Right ventricle myocardium superior (tissue), 1 donor: ENCODE measurements at regions of chr5 and their contacts with region 1.

Region 1: GRCh38 chr5:31581498-31582099 is 49.5 kb downstream of the C5orf22 start:
- DNase-seq: no peak
- ATAC-seq: peak; percentile 61

Region 2: DNA sequence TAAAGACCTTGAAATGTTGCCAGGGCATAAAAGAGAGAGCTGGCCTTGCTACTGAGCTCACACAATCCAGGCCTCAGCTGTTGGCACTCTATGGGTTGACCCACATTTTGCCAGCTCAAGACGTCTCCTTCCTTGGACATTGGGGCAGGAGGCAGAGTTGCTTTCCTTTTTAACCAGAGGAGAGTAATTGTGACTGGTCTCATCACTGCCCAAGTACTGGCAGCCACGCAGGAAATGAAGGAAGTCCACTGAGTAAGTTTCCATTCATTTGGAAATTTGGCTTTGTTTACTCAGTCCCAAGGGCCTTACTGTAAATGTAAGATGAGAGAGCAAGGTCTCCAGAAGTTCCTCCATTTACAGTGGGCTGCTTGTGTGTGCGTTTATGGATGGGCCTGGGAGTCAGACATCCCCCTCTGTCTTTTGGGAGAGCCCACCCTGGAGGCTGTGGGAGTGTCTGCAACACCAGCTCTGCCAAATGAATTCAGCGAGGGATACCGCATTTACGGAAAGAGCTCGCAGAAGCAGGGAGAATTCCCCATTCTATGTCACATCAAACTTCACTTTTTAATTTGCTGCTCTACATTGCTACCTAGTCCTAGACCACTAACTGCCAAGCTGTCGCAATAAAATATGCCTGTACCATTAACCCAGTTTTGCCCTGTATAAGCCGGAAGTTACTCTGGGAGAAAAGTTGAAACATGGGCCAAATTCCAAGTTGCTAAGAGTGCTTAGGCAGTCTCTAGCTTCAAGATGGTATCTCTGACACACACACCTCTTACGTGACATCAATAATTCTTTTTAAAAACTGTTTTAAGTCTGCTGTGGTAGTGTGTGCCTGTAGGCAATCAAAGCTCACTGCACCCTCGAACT is 32.8 kb after region 1 on chr5:
- intact Hi-C with region 1: no loop called
- DNase-seq: no peak
- ATAC-seq: no peak

Region 3: DNA sequence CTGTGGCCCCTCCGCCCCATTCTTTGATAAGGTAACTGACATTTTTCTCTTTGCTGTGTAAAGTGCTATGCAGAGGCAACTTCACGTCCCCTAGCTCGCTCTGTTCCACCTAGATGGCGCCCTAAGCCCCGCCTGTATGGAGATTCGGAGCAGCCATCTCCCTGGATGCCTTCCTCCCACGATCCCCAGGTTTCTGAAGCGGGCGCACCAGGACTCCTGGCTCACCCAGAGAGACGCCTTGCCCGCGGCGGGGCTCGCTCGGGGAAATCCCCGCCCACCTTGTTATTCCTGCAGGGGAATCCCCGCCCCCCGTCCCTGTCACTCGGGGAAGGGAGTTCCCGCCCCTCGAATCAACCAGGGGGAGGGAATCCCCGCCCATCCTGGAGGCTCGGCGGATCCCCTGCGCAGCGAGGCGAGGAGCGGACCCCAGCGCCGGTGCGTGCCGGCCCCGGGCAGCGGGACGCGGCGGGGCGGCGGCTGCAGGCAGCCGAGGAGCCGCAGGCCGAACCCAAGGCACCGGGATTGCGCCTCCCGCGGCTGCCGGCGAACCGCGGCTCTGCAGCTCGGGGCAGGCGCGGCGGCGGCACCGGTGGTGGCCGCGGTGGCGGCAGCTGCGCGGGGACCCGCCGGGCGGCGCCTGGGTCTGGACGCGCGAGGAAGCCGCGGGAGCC is 57.3 kb after region 1 on chr5 and contains the start of gene PDZD2:
- intact Hi-C with region 1: no loop called
- DNase-seq: peak; percentile 89
- ATAC-seq: peak; percentile 77
- total RNA-seq, gene PDZD2: 81.5 TPM

Region 4: DNA sequence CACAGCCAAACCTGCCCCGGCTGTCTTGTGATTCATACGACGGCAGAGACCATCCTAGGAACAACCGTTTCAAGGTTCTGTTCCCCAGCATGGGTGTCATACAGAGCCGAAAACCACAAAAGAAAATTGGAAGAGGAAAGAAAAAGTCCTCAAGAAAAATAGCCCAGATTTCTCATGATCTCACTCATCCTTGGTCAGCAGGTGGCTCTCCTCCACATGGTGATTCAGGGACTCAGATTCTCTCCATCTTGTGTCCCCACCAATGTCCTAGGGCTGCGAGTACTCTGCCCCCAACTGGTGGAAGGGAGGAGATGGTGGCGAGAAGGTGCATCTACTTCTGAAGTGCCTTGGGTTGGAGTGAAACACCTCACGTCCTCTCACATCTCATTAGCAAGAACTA is 83.0 kb after region 1 on chr5:
- intact Hi-C with region 1: no loop called
- DNase-seq: no peak
- ATAC-seq: no peak

Region 5: GRCh38 chr5:32092938-32093812 is 511.6 kb after region 1 on chr5:
- intact Hi-C with region 1: loop called (anchors 10 kb)
- DNase-seq: no peak
- ATAC-seq: peak; percentile 79